ENCODE measurements at regions of chr7 and their contacts with region 1.

Region 1: DNA sequence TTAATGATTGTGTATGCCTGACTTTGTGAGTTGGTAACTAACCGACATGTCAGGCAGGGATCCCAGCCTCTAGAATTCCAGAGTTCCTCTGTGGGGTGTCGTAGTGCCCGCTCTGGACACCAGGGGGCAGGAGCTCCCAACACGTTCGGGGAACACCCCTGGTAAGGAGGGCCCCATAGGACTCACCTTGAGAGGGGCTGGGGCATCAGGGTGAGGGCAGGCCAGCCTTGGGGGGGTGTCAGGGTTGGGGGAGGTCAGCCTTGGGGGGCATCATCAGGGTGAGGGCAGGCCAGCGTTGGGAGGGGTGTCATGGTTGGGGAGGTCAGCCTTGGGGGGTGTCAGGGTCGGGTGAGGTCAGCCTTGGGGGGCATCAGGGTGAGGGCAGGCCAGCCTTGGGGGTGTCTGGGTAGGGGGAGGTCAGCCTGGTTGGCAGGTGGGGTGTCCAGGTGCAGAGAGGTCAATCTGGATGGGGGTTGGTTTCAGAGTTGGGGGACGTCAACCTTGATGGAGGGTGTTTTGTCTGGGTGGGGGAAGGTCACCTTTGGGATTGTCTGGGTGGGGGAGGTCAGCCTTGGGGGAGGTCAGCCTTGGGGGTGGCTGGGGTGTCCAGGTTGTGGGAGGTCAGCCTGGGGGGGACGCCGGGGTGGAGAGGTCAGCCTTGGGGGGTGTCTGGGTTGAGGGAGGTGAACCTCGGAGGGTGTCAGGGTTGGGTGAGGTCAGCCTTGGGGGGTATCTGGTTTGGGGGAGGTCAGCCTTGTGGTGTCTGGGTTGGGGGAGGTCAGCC is 45.6 kb upstream of the SUN1 start:
- DNase-seq: no peak
- H3K4me3 ChIP-seq: no peak overlapping the region
- H3K27me3 ChIP-seq: no peaks in the 10 kb centered on the region
- CTCF ChIP-seq: peak; percentile 92

Region 2: GRCh38 chr7:798906-799470 is 12.3 kb after region 1 on chr7:
- CTCF ChIA-PET with region 1: interaction called, 11 read pairs
- POLR2A ChIA-PET with region 1: no interaction called
- DNase-seq: no peak
- H3K4me3 ChIP-seq: no peak overlapping the region
- H3K27me3 ChIP-seq: no peaks in the 10 kb centered on the region
- CTCF ChIP-seq: no peak

Region 3: GRCh38 chr7:876167-876967 is 89.7 kb after region 1 on chr7 and contains the start of gene GET4:
- CTCF ChIA-PET with region 1: interaction called, 80 read pairs
- POLR2A ChIA-PET with region 1: no interaction called
- DNase-seq: peak; percentile 57
- H3K4me3 ChIP-seq: peak within 1 kb of the TSS; percentile 98
- H3K27me3 ChIP-seq: no peaks in the 10 kb centered on the region
- CTCF ChIP-seq: 0 out of 2 replicates have a peak, but pooled peaks have one; percentile 22
- polyA plus RNA-seq, gene GET4: 15.6 and 21.7 TPM in 2 replicates

Measured in BJ (cell line).